HCT116 (cell line): ENCODE measurements at regions of chr7 and their contacts with region 1.

Region 1: DNA sequence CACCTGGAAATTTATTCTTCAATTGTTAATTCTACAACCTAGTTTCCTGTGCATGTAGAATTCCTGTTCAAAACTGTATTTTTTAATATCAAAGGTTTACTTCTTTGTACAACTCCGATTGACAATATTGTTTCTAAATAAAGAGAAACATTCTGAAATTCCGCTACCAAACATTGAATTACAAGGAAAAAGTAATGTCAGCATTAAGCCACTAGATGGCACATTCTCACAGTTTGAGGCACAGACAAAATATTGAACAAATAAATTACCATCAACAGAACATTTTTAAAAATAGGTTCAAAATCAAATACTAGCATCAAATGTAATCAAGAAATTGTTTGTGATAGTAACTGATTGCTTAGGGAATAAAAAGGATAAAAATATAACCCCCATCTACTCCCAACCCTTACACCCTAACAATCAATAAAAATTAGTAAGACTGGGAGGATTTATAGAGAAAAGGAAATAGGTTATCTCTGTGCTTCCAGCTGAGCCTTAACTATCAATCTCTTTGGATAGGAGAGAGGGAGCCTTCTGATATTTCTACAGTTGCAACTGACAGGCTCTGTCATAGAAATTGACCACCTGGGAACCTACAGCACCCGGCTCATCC is 86.6 kb upstream of the C7orf33 start:
- DNase-seq: peak; percentile 24
- ATAC-seq: no peak
- H3K4me3 ChIP-seq: no peak overlapping the region
- H3K27ac ChIP-seq: no peak overlapping the region
- H3K4me1 ChIP-seq: no peaks in the 10 kb centered on the region
- H3K27me3 ChIP-seq: peaks cover 7% of the 10 kb centered on the region; the same call in 1 of the 2 replicates
- CTCF ChIP-seq: peak; percentile 50 to 85 (median 82)
- POLR2A ChIP-seq: no peak
- RAD21 ChIP-seq: peak; percentile 88

Region 2: DNA sequence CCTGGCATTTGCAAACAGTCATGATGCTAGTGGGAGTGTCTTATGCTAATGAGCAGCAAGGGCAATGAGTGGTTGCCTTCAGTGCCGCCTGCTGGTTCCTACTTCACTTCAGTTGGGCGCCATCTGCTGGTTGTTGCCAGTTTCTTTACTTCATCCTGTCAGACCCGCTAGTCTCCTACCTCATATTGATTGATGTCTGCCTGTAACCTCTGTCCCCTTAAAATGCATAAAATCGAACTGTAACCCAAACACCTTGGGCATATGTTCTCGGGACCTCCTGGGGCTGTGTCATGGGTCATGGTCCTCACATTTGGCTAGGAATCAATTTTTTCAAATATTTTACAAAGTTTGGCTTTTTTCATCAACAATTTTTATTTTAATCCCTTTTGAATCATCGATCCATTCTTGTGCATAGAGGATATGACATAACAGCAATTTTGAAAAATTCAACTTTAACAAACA is 23.8 kb after region 1 on chr7:
- CTCF ChIA-PET with region 1: no interaction called
- POLR2A ChIA-PET with region 1: no interaction called
- RAD21 ChIA-PET with region 1: no interaction called
- intact Hi-C with region 1: loop called (anchors 2 kb)
- DNase-seq: peak; percentile 88
- ATAC-seq: peak; percentile 99
- H3K4me3 ChIP-seq: no peak overlapping the region
- H3K27ac ChIP-seq: no peak overlapping the region
- H3K4me1 ChIP-seq: no peaks in the 10 kb centered on the region
- H3K27me3 ChIP-seq: no peaks in the 10 kb centered on the region
- CTCF ChIP-seq: peak; percentile 90 to 99 (median 94)
- POLR2A ChIP-seq: no peak
- RAD21 ChIP-seq: peak; percentile 64